Endothelial cell of umbilical vein (primary cell): ENCODE measurements at regions of chr4 and their contacts with region 1.

Region 1: DNA sequence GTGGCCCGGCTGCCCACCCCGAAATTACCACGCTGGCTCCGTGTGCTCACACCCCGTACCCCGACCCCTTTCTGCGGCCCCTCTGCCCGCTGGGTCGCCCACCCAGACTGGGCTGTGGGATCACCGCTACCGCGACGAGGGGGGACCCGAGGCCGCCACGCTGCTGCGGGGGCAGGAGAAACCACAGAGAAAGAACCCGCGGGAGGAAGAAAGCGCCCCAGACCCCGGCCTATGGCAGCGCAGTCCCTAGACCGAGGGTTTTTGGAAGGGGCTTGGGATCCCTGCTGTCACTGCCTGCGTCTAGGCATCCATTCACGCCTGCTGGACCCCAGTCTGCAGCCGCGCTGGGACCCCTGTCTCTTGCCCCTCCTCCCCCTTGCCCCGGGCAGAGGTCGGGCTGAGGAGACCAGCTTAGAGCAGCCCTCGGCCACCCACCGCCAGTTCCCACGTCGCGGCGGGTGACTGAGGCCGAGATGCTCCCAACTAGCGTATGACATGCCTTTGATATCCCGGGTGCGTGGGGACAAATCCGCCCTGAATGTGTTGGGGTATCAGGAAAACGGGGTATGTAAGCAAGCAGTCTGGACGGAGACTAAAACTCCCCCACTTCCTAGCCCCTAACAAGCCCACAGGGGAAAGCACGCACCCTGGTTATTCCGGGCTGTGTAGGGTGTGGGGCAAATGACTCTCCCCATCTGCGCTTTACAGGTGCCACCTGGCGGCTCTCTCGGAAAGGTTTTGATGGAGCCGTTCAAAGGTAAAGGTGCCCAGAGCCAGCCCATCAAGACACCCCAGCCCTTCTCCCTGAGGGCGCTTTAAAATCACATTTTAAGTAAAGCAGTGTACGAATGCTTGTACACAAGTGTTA is 862 bp upstream of the INPP4B start:
- DNase-seq: peak; percentile 18
- H3K4me3 ChIP-seq: peak overlapping the region; percentile 42 to 68 (median 61)
- H3K27ac ChIP-seq: no peak overlapping the region
- H3K4me1 ChIP-seq: no peaks in the 10 kb centered on the region
- H3K27me3 ChIP-seq: peaks cover 14 to 21% of the 10 kb centered on the region in 2 experiments
- CTCF ChIP-seq: peak in 1 of 2 donors; percentile 22
- POLR2A ChIP-seq: no peak

Region 2: DNA sequence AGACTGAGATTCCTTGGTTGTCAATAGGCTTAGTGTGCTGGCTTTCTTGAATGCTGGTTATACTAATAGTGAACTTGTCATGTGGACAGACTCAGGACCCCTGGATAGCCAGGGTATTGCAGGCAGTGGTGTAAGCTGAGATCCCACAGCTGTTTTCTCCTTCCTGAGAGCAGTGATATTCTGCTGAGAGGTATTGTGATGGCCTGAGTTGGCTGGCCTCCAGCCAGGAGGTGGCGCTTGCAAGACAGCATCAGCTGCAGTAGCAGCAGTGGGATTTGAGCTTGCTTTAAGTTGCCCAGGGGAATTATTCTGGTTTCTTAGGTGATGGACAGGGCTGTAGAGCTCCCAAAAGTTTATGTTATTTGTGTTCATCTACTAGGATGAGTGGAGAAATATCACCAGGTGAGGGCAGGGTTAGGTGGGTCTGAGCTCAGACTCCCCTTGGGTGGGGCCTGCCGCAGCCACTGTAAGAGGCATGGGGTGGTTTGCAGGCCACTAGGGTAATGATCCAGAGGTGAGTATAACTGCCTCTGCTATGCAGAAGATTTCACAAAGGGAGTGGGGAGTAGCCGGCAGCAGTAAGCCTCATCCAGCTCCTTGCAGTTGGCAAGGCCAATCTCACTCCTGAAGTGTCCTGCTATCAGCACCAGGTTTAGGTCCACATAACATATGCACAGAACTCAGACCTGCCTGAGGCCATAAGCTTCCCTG is 1144.3 kb before region 1 on chr4:
- CTCF ChIA-PET with region 1: no interaction called
- POLR2A ChIA-PET with region 1: no interaction called
- dilution Hi-C with region 1: no loop called
- intact Hi-C with region 1: loop called (anchors 10 kb)
- DNase-seq: peak; percentile 20
- H3K4me3 ChIP-seq: no peak overlapping the region
- H3K27ac ChIP-seq: no peak overlapping the region
- H3K4me1 ChIP-seq: no peaks in the 10 kb centered on the region
- H3K27me3 ChIP-seq: no peaks in the 10 kb centered on the region
- CTCF ChIP-seq: no peak
- POLR2A ChIP-seq: no peak

Region 3: GRCh38 chr4:142687547-142688275 is 159.3 kb before region 1 on chr4:
- CTCF ChIA-PET with region 1: no interaction called
- POLR2A ChIA-PET with region 1: no interaction called
- dilution Hi-C with region 1: no loop called
- intact Hi-C with region 1: no loop called
- DNase-seq: no peak
- H3K4me3 ChIP-seq: no peak overlapping the region
- H3K27ac ChIP-seq: no peak overlapping the region
- H3K4me1 ChIP-seq: no peaks in the 10 kb centered on the region
- H3K27me3 ChIP-seq: no peaks in the 10 kb centered on the region
- CTCF ChIP-seq: no peak
- POLR2A ChIP-seq: no peak

Region 4: GRCh38 chr4:143184217-143185116 is 337.5 kb after region 1 on chr4 and contains the start of gene USP38:
- CTCF ChIA-PET with region 1: no interaction called
- POLR2A ChIA-PET with region 1: no interaction called
- dilution Hi-C with region 1: no loop called
- intact Hi-C with region 1: loop called (anchors 10 kb)
- DNase-seq: peak; percentile 90
- H3K4me3 ChIP-seq: peak within 1 kb of the TSS; percentile 64 to 84 (median 69)
- H3K27ac ChIP-seq: peak within 1 kb of the TSS; percentile 73
- H3K4me1 ChIP-seq: peaks cover 30% of the 10 kb centered on the region
- H3K27me3 ChIP-seq: no peaks in the 10 kb centered on the region
- CTCF ChIP-seq: no peak
- POLR2A ChIP-seq: peak; percentile 49
- total RNA-seq, gene USP38: 17.0 and 18.1 TPM in 2 replicates

Region 5: DNA sequence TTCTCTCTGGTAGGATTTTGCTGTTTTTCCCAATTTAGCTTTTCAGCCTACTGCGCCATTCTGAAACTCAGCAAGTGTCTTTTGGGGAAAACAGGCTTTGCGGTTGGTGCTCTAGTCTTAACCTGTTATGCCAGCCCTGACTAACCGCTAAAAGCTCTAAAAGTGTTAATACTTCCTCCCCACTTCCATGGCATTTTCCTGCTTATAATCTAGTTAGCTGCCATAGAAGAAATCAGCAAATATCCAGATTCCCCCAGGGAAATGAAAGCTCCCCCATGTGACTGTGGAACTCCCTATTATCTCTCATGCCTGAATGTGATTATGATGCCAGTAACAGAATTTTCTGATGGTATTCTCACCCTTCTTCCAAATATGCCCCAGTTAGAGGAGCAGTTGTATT is 1322.2 kb after region 1 on chr4:
- CTCF ChIA-PET with region 1: no interaction called
- POLR2A ChIA-PET with region 1: no interaction called
- dilution Hi-C with region 1: no loop called
- intact Hi-C with region 1: no loop called
- DNase-seq: no peak
- H3K4me3 ChIP-seq: no peak overlapping the region
- H3K27ac ChIP-seq: no peak overlapping the region
- H3K4me1 ChIP-seq: no peaks in the 10 kb centered on the region
- H3K27me3 ChIP-seq: peaks cover 2% of the 10 kb centered on the region in 2 experiments
- CTCF ChIP-seq: no peak
- POLR2A ChIP-seq: no peak